Sigmoid colon (tissue), 7 donors: ENCODE measurements at regions of chr1 and their contacts with region 1.

Region 1: GRCh38 chr1:221478050-221478949 is 263.6 kb downstream of the DUSP10 start:
- DNase-seq: peak; percentile 78
- H3K4me3 ChIP-seq: no peak overlapping the region
- H3K27ac ChIP-seq: no peak overlapping the region
- H3K4me1 ChIP-seq: peaks cover 0 to 7% (median 0%) of the 10 kb centered on the region in 4 donors
- H3K27me3 ChIP-seq: no peaks in the 10 kb centered on the region
- CTCF ChIP-seq: peak; percentile 15 to 65 (median 30)
- EP300 ChIP-seq: no peak
- POLR2A ChIP-seq: no peak

Region 2: GRCh38 chr1:220906561-220907333 is 571.6 kb before region 1 on chr1:
- intact Hi-C with region 1: no loop called
- DNase-seq: no peak
- H3K4me3 ChIP-seq: no peak overlapping the region
- H3K27ac ChIP-seq: no peak overlapping the region
- H3K4me1 ChIP-seq: peaks cover 0 to 16% (median 6%) of the 10 kb centered on the region in 4 donors
- H3K27me3 ChIP-seq: no peaks in the 10 kb centered on the region
- CTCF ChIP-seq: no peak
- EP300 ChIP-seq: no peak
- POLR2A ChIP-seq: no peak

Region 3: DNA sequence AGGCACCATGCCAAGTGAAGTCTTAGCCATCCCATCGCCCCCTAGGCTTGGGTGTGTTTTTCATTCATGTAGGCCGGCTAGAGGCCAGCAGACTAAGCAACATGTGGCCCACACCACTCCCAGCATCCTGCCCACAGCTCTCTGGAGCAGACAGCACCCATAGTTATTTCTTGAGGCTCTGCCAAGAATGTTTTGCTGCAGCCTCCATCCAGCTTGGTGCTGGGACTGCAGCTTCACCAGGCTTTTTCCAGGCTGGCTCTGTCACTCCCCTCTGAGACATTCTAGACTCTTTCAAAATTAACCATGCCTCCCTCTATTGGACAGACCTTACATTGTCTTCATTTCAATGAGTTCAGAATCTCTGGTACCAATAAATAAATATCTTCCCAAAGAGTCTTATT is 159.3 kb after region 1 on chr1:
- intact Hi-C with region 1: no loop called
- DNase-seq: peak; percentile 66
- H3K4me3 ChIP-seq: no peak overlapping the region
- H3K27ac ChIP-seq: no peak overlapping the region
- H3K4me1 ChIP-seq: peaks cover 0 to 10% (median 3%) of the 10 kb centered on the region in 4 donors
- H3K27me3 ChIP-seq: no peaks in the 10 kb centered on the region
- CTCF ChIP-seq: no peak
- EP300 ChIP-seq: no peak
- POLR2A ChIP-seq: no peak

Region 4: DNA sequence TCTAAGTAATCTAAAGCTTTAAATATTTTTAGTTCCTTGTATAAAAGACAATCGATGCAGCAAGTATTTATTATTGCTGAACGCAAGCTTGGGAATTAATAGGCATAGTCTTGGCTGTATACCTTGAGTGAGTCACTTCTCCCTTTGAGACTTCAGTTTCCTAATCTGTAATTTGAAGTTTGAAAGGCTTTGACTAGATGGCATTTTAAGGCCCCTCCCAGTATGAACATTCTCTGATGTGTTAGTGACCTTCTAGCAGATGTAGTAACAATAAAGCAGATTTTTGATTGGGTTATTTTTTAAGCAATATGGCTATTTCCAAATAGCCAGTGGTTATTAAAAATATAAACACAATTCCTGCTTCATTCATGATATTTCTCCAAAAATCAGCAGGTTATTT is 205.4 kb after region 1 on chr1:
- intact Hi-C with region 1: no loop called
- DNase-seq: no peak
- H3K4me3 ChIP-seq: no peak overlapping the region
- H3K27ac ChIP-seq: no peak overlapping the region
- H3K4me1 ChIP-seq: no peaks in the 10 kb centered on the region
- H3K27me3 ChIP-seq: no peaks in the 10 kb centered on the region
- CTCF ChIP-seq: no peak
- EP300 ChIP-seq: no peak
- POLR2A ChIP-seq: no peak

Region 5: DNA sequence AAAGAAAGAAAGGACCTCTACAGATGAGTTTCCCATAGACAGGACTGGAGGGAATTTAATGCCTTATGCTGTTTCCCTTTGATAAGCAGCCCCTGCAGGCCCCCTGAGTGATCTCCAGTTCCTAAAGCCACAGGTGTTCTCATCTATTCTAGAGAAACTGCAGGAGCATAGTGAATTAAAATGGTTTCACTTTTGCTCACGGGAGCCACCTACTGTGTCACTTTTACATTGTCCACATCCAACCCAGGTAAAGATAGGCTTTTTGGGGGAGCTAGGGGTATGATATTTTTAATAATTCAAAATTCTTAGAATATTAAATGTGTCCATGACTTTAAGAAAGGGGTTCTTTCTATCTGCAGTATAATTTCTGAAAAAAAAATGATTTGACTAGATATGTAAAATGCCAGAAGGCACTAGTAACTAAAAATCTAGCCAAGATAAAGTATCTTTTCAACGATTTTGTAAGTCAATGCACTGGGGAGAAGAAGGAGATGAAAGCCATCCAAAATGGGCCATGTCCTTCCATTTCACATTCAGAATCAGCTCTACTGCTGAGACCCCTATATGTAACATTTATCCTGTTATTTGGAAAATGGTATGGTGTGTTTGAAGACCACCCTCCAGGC is 530.9 kb after region 1 on chr1:
- intact Hi-C with region 1: loop called (anchors 5 kb)
- DNase-seq: no peak
- H3K4me3 ChIP-seq: no peak overlapping the region
- H3K27ac ChIP-seq: no peak overlapping the region
- H3K4me1 ChIP-seq: peaks cover 0 to 3% (median 0%) of the 10 kb centered on the region in 4 donors
- H3K27me3 ChIP-seq: no peaks in the 10 kb centered on the region
- CTCF ChIP-seq: peak in 2 of 4 experiments; percentile 5 to 45
- EP300 ChIP-seq: no peak
- POLR2A ChIP-seq: no peak

Region 6: DNA sequence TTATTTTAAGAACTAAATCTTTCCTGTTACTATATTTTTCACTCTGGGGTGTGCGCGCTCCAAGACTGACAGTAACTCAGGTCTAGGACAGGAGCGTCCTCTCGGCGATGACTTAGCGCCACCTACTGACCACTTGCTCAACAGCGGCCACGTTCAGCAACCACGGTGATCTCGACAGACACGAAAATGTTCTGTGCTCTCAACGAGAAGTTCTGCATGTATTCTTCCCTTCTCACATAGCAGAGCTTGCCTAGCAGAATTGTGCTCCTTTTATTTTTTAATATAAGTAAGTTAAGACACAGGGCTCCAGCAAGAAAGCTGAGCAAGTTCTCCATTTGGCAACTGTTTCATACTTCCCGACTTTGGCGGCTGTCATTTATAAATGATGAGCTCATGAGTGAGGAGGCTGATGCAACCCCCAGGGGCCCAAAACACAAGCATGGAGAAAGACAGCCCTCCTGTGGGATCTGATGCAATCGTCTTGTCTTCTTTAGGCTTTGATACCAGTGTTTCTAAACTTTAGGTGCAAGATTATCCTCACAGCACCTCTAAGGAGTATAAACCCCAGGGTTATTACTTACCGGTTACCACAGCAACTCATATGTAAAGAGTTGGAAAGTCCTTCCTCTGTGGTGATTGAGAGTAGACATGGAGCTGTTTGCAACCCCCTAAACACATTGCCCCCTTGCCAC is 977.0 kb after region 1 on chr1:
- intact Hi-C with region 1: loop called (anchors 2 kb)
- DNase-seq: peak; percentile 93
- H3K4me3 ChIP-seq: peak overlapping the region in 2 of 4 donors; percentile 15 to 22
- H3K27ac ChIP-seq: peak overlapping the region; percentile 31 to 64 (median 42)
- H3K4me1 ChIP-seq: peaks cover 0 to 14% (median 11%) of the 10 kb centered on the region in 4 donors
- H3K27me3 ChIP-seq: no peaks in the 10 kb centered on the region
- CTCF ChIP-seq: peak; percentile 79 to 90 (median 87)
- EP300 ChIP-seq: no peak
- POLR2A ChIP-seq: no peak